ENCODE measurements at regions of chr6 and their contacts with region 1.

Region 1: GRCh38 chr6:27078734-27079357 is 168.7 kb upstream of the PRSS16 start:
- DNase-seq: peak; percentile 71
- H3K4me3 ChIP-seq: no peak overlapping the region
- H3K27ac ChIP-seq: no peak overlapping the region
- H3K4me1 ChIP-seq: peaks cover 2% of the 10 kb centered on the region
- H3K27me3 ChIP-seq: peaks cover 6 to 16% of the 10 kb centered on the region in 2 experiments
- CTCF ChIP-seq: peak; percentile 48 to 49
- POLR2A ChIP-seq: no peak

Region 2: GRCh38 chr6:26607434-26608230 is 471.2 kb before region 1 on chr6:
- CTCF ChIA-PET with region 1: interaction called, 26 read pairs
- POLR2A ChIA-PET with region 1: no interaction called
- dilution Hi-C with region 1: no loop called
- intact Hi-C with region 1: loop called (anchors 1 kb)
- DNase-seq: peak; percentile 61
- H3K4me3 ChIP-seq: peak overlapping the region in 1 of 3 experiments; percentile 11
- H3K27ac ChIP-seq: no peak overlapping the region
- H3K4me1 ChIP-seq: peaks cover 2% of the 10 kb centered on the region
- H3K27me3 ChIP-seq: peaks cover 21 to 46% of the 10 kb centered on the region in 2 experiments
- CTCF ChIP-seq: peak; percentile 71 to 72
- POLR2A ChIP-seq: no peak